Aorta (tissue), 5 donors: ENCODE measurements at regions of chr4 and their contacts with region 1.

Region 1: DNA sequence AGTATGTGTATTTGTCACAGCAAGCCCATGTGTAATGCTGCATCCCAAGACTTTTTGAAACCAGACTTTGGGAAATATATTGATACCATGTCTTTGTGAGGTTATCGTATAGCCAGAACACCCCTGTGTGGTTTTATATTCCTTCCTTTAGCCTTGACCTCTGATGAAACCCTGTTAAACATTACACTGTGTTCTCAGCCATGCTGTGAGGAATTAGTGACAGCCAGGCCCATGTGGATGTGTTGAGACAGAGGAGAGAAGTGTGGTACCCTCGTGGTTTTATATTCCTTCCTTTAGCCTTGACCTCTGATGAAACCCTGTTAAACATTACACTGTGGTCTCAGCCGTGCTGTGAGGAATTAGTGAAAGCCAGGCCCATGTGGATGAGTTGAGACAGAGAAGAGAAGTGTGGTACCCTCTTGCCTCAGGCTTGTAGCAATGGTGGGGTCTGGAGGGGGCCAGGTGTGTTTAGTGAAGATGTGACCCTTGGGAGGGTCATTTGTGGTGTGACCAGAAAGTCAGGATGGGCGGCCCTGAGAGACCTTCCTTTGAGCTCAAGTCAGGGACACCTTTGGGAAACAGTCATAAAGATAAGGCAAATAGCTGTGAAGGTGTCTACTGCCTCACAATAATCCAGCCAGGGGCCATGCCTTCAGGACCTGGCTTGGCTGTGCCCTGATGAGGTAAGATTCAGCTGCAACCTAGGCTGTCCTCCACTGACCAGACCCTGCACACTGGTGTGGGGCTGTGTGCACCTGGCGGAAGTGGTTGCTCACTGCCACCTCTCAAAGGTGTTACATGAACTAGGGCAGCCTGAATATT is 110.0 kb downstream of the IRF2 start:
- DNase-seq: no peak
- ATAC-seq: no peak
- H3K4me3 ChIP-seq: no peak overlapping the region
- H3K27ac ChIP-seq: no peak overlapping the region
- H3K4me1 ChIP-seq: peaks cover 1 to 2% of the 10 kb centered on the region in 2 donors
- H3K27me3 ChIP-seq: no peaks in the 10 kb centered on the region

Region 2: DNA sequence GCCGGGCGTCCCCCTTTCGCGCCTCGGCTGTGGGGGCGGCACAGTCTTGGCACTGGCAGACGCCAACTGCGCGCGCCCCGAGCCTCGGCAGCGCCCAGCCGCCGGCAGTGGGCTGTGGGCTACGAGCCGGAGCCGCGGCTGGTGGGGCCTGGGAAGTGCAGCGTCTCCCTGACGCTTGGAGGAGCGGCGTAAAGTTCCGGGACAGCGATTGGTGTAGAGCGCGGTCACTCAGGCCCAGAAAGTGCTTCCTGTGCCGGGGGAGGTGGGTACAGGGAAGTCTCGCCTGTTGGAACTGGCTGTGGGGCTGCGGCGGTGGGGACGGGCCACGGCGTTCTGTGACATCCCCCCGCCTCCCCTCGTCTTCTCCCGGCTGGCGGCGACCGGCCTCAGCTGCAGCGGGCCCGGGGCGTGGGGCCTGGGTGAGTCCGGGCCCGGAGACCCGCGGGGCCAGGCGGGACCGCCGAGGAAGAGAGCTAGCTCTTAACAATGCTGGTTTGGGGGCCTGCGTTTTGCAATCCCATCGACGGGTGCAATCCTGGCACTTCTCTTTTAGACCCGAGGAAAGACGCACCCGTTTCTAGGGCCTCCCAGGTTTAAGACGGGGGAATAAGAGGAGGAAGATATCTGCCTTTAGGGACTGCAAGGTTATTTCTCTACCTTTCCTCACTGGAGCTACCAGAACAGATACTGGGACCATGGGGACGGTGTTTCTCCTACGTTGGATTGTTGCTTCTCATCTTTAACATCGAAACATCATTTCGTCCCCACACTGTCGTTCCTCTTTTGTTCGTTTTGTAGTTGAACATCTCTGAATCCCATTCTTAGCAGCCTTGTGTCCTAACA is 705.1 kb before region 1 on chr4 and contains the starts of genes RWDD4 and TRAPPC11:
- intact Hi-C with region 1: no loop called
- DNase-seq: peak; percentile 99
- ATAC-seq: peak; percentile 100
- H3K4me3 ChIP-seq: peak within 1 kb of the TSS; percentile 97
- H3K27ac ChIP-seq: peak within 1 kb of the TSS in 1 of 2 donors; percentile 92
- H3K4me1 ChIP-seq: peaks cover 0 to 6% of the 10 kb centered on the region in 2 donors
- H3K27me3 ChIP-seq: no peaks in the 10 kb centered on the region
- total RNA-seq, gene RWDD4: 17.3 to 20.2 TPM
- total RNA-seq, gene TRAPPC11: 31.9 to 44.6 TPM

Region 3: DNA sequence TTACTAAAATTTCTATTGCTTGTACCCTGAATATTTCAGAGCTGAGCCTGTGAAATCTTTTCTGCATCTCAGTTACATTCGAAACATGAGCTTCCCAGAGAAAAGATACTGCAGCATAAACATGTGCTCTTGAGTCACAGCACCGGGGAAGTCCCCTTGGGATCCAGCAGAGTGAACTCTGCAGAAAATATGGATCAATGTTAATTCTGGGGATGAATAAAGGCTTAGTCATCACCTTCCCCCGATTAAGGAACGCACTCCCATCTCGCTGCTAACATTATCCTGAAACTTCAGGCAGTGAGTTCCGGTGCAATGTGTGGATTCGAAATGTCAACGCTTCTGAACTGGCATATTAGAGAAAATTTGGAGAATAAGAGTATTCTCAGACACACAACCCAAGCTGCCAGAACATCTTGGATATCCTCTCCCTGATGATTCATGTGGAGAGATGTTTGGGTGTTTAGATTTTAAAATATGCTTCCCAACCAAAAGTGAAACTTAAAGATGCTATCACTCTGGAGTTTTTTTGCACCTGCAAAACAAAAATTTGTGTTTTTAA is 19.3 kb after region 1 on chr4:
- intact Hi-C with region 1: loop called in 1 of 2 experiments (anchors 1 kb)
- DNase-seq: peak in 1 of 2 donors; percentile 74
- ATAC-seq: peak; percentile 80
- H3K4me3 ChIP-seq: peak overlapping the region; percentile 29 to 54
- H3K27ac ChIP-seq: peak overlapping the region; percentile 57 to 69
- H3K4me1 ChIP-seq: no peaks in the 10 kb centered on the region
- H3K27me3 ChIP-seq: no peaks in the 10 kb centered on the region

Region 4: DNA sequence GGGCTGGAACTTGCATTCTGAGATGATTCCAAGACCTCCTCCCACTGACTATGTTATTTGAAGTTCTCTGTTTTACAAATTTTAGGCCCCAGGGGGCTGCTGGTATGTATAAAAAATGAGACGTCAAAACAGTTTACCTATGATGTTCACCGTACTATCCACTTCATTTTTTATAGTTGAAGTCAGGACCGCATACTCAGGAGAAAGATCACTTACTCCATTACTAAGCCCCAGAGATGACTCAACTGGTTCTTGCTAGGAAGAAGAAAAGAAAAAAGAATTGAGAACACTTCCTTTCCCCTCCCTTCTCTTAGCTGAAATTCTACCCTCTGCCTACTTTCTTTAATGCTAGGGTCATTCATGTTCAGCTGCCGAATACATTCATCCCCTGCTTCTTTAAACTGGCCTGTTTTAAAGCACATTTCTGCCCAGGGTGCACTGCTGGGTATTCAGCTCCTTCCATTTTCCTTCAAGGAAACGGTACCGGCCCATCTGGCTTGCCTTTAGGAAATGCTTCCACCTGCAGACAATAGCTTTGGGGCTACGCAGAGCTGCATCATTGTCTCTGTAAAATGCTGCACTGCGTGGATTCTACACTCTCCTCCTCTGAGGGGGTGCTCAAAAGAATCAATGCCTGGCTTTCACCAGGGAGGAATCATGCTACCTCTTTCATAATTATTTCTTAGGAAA is 43.9 kb after region 1 on chr4:
- intact Hi-C with region 1: no loop called
- DNase-seq: no peak
- ATAC-seq: no peak
- H3K4me3 ChIP-seq: no peak overlapping the region
- H3K27ac ChIP-seq: no peak overlapping the region
- H3K4me1 ChIP-seq: no peaks in the 10 kb centered on the region
- H3K27me3 ChIP-seq: peaks cover 0 to 1% of the 10 kb centered on the region in 2 donors

Region 5: GRCh38 chr4:184448821-184449220 is 84.5 kb after region 1 on chr4:
- intact Hi-C with region 1: no loop called
- DNase-seq: peak in 1 of 2 donors; percentile 58
- ATAC-seq: peak; percentile 82
- H3K4me3 ChIP-seq: no peak overlapping the region
- H3K27ac ChIP-seq: no peak overlapping the region
- H3K4me1 ChIP-seq: no peaks in the 10 kb centered on the region
- H3K27me3 ChIP-seq: no peaks in the 10 kb centered on the region

Region 6: GRCh38 chr4:185343726-185344581 is 979.6 kb after region 1 on chr4:
- intact Hi-C with region 1: no loop called
- DNase-seq: peak in 1 of 2 donors; percentile 52
- ATAC-seq: peak; percentile 14
- H3K4me3 ChIP-seq: no peak overlapping the region
- H3K27ac ChIP-seq: peak overlapping the region; percentile 36 to 98
- H3K4me1 ChIP-seq: peaks cover 4 to 7% of the 10 kb centered on the region in 2 donors
- H3K27me3 ChIP-seq: no peaks in the 10 kb centered on the region